ENCODE measurements at regions of chr7 and their contacts with region 1.

Region 1: DNA sequence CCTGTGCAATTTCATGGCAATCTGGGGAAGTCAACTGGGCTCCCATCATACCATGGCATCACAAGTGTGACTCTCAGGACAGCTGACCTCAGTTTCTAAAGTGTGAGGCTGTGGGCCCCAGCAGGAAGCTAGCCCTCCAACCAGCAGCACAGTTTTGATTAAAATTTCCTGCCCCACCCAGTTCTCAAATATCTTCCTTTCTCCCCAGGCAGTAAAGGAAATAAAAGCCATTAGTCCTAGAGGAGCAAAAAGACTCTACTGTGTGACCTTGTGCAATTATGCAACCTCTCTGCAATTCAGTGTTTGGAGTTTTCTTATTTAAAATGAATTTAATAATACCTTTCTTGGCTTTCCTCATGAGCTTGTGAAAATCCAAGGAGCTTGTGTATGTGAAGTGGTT is 143.1 kb upstream of the CDCA7L start:
- DNase-seq: no peak
- ATAC-seq: no peak
- H3K4me3 Mint-ChIP-seq: no peak overlapping the region
- H3K27ac Mint-ChIP-seq: no peak overlapping the region
- H3K4me1 Mint-ChIP-seq: no peaks in the 10 kb centered on the region
- H3K27me3 Mint-ChIP-seq: peaks cover 1% of the 10 kb centered on the region
- CTCF ChIP-seq: no peak

Region 2: DNA sequence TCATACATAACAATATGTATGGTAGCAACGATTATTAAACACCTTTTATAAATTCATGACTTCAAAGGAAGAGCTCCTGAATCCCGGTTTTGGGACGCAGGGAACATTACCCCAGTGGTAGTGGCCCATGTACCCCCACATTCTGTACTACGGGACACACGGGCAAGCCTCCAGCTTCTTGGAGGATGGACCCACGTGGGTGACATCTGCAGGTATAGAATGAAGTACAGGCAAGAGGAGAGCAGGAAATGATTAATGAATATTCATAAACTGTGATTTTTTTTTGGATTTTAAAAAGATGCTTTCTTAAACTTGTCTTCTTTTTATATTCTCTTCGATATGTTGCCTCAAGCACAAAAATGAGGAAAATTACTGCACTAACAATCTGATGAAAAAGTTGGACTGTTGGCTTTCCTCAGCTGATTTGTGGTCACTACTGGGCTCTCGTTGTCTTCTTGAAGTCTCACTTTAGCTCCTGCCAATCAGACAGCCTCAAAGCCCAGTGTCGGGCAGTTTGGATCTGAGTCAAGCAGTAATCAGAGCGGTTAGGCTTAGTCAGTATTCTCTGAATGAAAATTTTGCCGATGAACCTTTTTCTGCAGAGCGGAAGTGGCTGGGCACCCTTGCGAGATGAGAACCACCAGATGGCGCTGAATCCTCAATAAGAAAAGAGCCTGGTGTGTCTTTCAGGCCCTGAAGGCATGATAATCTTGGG is 14.6 kb after region 1 on chr7:
- CTCF ChIA-PET with region 1: interaction called, 22 read pairs
- POLR2A ChIA-PET with region 1: no interaction called
- intact Hi-C with region 1: no loop called
- DNase-seq: peak; percentile 86
- ATAC-seq: peak; percentile 99
- H3K4me3 Mint-ChIP-seq: no peak overlapping the region
- H3K27ac Mint-ChIP-seq: no peak overlapping the region
- H3K4me1 Mint-ChIP-seq: peaks cover 4% of the 10 kb centered on the region
- H3K27me3 Mint-ChIP-seq: no peaks in the 10 kb centered on the region
- CTCF ChIP-seq: peak; percentile 65

Region 3: GRCh38 chr7:22234227-22234626 is 145.4 kb after region 1 on chr7:
- CTCF ChIA-PET with region 1: no interaction called
- POLR2A ChIA-PET with region 1: no interaction called
- intact Hi-C with region 1: no loop called
- DNase-seq: no peak
- ATAC-seq: no peak
- H3K4me3 Mint-ChIP-seq: no peak overlapping the region
- H3K27ac Mint-ChIP-seq: no peak overlapping the region
- H3K4me1 Mint-ChIP-seq: no peaks in the 10 kb centered on the region
- H3K27me3 Mint-ChIP-seq: peaks cover 5% of the 10 kb centered on the region
- CTCF ChIP-seq: no peak